Right ventricle myocardium inferior (tissue), 1 donor: ENCODE measurements at regions of chr2 and their contacts with region 1.

Region 1: DNA sequence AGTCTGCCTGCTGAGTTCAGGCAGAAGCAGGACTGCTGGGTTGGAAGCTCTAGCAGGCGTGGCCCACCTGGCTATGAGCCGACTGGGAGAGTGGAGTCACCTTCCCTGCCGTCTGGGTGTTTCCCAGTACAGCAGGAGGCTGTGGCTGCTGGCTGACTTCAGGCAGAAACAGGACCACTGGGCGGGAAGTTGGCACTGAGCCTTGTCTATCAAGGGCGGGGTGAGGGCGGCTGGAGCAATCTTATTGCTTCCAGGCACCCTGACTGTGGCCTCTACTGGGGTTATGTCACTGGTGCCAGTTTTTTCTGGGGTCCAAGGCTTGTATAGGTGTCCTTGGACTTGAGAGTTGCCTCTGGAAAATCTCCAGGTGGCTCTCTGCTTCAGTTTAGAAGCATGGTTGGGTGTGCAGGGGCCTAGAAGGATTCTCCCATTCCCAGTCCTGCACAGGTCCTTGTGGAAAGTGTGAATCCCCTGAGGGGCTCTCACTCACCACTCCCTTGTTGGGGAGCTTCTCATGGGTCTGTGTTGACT is 30.5 kb downstream of the LTBP1 start:
- DNase-seq: peak; percentile 75
- ATAC-seq: peak; percentile 96

Region 2: GRCh38 chr2:33013684-33014110 is 36.4 kb after region 1 on chr2:
- intact Hi-C with region 1: loop called (anchors 5 kb)
- DNase-seq: no peak
- ATAC-seq: no peak